Posterior vena cava (tissue), 2 donors: ENCODE measurements at regions of chr15 and their contacts with region 1.

Region 1: DNA sequence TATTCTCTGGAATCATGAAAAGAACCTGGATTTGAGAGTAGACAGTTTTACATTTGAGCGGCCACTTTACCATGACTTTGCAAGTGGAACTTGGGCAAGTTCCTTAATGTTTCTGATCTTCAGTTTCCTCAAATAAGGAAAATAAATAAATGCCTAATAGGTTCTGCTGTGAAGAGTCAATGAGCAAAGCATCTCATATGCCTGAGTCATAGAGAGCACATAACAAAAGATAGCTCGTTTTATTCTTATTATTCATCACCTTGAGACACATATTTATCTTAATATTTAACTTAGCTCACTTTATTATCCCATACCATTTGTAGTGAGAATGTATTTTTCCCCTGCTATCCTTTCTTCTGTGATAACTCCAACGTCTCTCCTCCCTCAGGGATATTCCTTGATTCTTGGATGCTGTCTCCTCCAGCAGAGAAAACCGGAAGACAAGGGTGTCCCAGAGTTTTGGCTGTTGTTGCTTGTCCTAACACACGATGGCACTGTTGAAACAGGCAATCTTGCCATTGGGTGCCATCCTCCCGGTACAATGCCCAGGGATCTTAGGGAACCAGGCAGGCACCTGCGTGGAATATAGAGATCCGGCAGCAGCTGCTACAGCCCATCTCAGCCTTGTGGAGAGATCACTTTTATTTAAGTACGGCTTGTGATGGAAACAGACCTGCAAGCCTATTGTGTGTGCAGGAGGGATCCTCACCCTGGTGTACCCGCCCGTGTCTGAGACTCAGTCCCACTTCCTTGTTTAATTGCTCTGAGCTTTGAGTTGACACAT is 33.3 kb upstream of the VPS33B start:
- DNase-seq: no peak

Region 2: DNA sequence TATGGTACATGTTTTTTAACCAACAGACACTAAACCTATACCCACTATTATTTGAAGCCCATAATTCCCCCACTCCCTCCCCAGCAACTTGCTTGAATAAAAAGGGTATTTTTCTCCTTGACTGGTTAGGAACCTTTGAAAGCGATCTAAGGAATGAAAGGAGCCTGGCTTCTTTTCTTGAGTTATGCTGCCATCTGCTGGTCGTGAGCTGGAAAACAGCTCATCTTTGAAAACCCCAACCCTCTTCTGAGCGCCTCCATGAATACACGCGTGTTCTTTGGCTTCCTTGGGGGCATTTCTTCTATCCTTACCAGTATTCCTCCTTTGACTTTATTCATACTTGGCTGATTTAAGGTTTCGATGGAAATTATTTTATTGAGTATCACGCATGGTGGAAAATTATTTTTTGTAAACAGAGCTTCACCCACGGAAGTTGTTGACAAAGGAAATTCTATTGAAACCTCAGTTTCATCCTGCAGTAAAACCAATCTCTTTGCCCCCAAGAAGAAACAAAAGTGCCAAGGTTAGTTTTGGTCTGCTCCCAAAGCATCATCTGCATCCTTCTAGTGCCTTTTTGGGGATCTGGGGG is 215.9 kb after region 1 on chr15:
- intact Hi-C with region 1: loop called (anchors 2 to 5 kb)
- DNase-seq: no peak